Naive thymus-derived CD4-positive, alpha-beta T cell (primary cell): ENCODE measurements at regions of chr10 and their contacts with region 1.

Region 1: DNA sequence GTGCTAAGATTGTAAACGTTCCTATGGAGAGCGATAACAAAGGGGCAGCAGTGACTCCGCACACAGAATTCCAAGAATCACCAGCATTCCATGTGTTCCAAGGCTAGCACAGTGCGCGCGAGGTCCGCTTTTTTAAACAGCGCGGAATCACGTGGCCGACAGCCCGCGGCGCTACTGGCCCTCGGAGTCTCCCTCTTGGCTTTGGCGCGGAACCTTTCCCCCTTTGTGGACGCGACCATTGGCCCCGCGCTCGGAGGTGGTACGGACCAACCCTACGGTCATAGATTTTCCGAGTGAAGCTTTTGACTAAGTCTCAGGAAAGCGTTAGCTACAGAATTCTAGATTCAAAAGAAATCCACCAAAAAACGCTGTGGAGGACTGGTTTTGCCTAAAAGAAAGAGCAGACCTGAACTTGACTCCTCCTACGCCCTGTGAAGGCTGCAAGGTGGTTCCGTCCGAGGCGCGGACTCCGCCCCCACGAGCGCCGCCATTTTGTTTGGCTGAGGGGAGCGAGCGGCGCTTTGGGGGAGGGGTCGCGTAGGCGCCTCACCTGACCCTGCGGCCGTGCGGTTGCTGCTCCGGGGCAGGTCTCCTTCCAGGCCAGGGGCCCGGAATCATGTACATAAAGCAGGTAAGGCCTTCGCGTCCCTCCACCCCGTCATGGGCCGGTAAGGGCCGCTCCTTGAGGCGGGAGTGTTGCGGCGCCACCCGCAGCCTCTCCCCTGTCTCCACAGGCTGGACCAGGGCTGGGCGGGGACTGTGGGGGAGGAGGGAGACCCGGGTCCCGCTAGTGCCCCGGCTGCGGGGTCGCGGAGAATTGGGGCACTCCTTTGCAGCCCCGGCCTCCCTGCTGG is at the start of gene SMC3:
- DNase-seq: peak; percentile 82 to 96 (median 94)
- ATAC-seq: peak; percentile 94
- H3K4me3 ChIP-seq: peak within 1 kb of the TSS; percentile 88
- H3K4me3 Mint-ChIP-seq: peak within 1 kb of the TSS; percentile 91 to 99 (median 96)
- H3K27ac ChIP-seq: peak within 1 kb of the TSS; percentile 88
- H3K27ac Mint-ChIP-seq: peak within 1 kb of the TSS; percentile 96 to 99 (median 97)
- H3K4me1 ChIP-seq: peaks cover 20 to 21% of the 10 kb centered on the region in 2 donors
- H3K4me1 Mint-ChIP-seq: peaks cover 21 to 45% (median 38%) of the 10 kb centered on the region in 7 donors
- H3K27me3 ChIP-seq: no peaks in the 10 kb centered on the region
- H3K27me3 Mint-ChIP-seq: peaks cover 6 to 26% (median 14%) of the 10 kb centered on the region in 5 donors
- total RNA-seq, gene SMC3: 29.8 to 69.8 (median 48.5) TPM

Region 2: DNA sequence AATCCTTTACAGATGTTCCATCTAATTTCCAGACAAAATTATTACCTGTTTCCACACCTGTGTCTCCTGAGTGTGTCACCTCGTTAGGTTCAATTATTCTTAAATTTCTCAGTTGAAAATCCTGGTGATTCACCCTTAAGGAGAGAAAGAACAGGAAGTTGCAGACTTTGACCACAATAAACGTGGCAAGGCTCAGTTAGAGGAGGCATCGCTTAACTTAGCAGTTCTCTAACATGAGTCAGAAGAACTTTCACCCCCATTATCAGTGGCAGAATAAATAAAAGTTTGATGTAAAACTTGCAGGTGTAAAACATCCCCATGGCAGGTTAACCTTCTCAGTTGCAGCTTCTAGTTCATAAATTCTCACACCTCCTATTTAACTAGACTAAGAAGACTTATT is 652.5 kb before region 1 on chr10:
- CTCF ChIA-PET with region 1: no interaction called
- POLR2A ChIA-PET with region 1: no interaction called
- intact Hi-C with region 1: loop called in 1 of 2 experiments (anchors 10 kb)
- DNase-seq: peak in 7 of 9 donors; percentile 37 to 71 (median 56)
- ATAC-seq: peak; percentile 93
- H3K4me3 ChIP-seq: no peak overlapping the region
- H3K4me3 Mint-ChIP-seq: peak overlapping the region; percentile 56 to 78 (median 68)
- H3K27ac ChIP-seq: no peak overlapping the region
- H3K27ac Mint-ChIP-seq: peak overlapping the region in 8 of 9 donors; percentile 40 to 88 (median 58)
- H3K4me1 ChIP-seq: peaks cover 32 to 60% of the 10 kb centered on the region in 2 donors
- H3K4me1 Mint-ChIP-seq: peaks cover 64 to 94% (median 87%) of the 10 kb centered on the region in 7 donors
- H3K27me3 ChIP-seq: no peaks in the 10 kb centered on the region
- H3K27me3 Mint-ChIP-seq: no peaks in the 10 kb centered on the region

Region 3: DNA sequence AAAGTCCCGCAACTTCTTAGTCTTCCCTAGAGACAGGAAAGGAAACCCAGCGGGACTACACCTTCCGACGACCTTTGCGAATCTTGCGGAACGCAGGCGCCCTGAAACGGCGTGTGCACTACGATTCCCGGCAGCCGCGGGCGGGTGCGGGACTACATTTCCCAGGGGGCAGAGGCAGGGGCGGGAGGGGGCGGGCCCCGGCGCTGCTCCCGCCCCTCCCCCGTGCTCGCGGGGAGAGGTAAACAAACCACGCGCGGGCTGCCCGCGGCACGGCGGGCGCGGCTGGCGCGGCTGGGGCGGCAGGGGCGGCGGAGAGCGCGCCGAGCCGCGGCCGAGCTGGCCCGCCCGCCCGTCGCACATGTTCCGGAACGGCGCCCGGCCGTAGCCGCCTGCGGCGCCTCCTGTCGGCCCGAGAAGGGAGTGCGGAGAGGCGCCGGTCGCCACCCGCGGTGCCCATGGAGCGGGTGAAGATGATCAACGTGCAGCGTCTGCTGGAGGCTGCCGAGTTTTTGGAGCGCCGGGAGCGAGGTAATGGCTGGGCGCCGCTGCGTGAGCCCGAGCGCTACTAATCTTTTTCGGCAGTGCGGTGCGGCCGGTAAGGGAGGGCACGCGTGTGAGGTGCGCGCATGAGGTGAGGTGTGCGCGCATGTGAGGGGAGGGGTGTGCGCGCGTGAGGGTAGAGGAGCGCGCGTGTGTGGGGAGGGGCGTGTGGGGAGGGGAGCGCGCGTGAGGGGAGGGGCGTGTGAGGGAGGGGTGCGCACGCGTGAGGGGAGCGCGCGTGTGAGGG is 341.5 kb before region 1 on chr10:
- CTCF ChIA-PET with region 1: no interaction called
- POLR2A ChIA-PET with region 1: interaction called, 3 read pairs
- intact Hi-C with region 1: loop called (anchors 1 kb)
- DNase-seq: peak; percentile 83 to 91 (median 88)
- ATAC-seq: peak; percentile 73
- H3K4me3 ChIP-seq: peak overlapping the region; percentile 75
- H3K4me3 Mint-ChIP-seq: peak overlapping the region; percentile 87 to 99 (median 94)
- H3K27ac ChIP-seq: peak overlapping the region; percentile 92
- H3K27ac Mint-ChIP-seq: peak overlapping the region; percentile 78 to 97 (median 96)
- H3K4me1 ChIP-seq: peaks cover 16 to 27% of the 10 kb centered on the region in 2 donors
- H3K4me1 Mint-ChIP-seq: peaks cover 27 to 68% (median 49%) of the 10 kb centered on the region in 7 donors
- H3K27me3 ChIP-seq: no peaks in the 10 kb centered on the region
- H3K27me3 Mint-ChIP-seq: no peaks in the 10 kb centered on the region

Region 4: GRCh38 chr10:110408203-110408751 is 159.2 kb before region 1 on chr10:
- CTCF ChIA-PET with region 1: no interaction called
- POLR2A ChIA-PET with region 1: no interaction called
- intact Hi-C with region 1: no loop called
- DNase-seq: no peak
- ATAC-seq: peak; percentile 13
- H3K4me3 ChIP-seq: no peak overlapping the region
- H3K4me3 Mint-ChIP-seq: no peak overlapping the region
- H3K27ac ChIP-seq: no peak overlapping the region
- H3K27ac Mint-ChIP-seq: no peak overlapping the region
- H3K4me1 ChIP-seq: peaks cover 0 to 6% of the 10 kb centered on the region in 2 donors
- H3K4me1 Mint-ChIP-seq: peaks cover 0 to 48% (median 5%) of the 10 kb centered on the region in 7 donors
- H3K27me3 ChIP-seq: no peaks in the 10 kb centered on the region
- H3K27me3 Mint-ChIP-seq: peaks cover 0 to 2% (median 0%) of the 10 kb centered on the region in 5 donors

Region 5: DNA sequence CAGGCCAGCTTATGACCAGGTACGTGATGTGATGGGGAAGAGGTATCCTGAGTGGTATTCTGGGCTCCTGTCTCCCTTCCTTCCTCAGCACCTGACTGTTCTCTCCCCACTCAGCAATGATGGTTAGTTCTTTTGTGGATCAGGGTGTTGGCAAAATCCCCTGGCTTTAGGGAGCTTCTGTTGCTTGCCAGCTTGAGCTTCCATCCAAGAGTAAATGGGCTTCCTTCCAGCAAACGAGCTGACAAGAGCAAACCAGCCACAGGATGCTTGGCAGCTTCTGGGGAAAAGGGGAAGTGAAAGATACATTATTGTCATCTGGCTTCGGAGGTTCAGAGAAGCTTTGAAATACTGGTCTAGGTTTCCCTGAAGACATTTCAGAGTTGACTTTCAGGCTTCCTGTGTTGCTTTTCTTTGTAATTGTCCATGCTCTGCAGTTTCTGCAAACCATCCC is 64.6 kb before region 1 on chr10:
- CTCF ChIA-PET with region 1: no interaction called
- POLR2A ChIA-PET with region 1: interaction called, 3 read pairs
- intact Hi-C with region 1: loop called in 1 of 2 experiments (anchors 1 kb)
- DNase-seq: peak in 1 of 9 donors; percentile 18
- ATAC-seq: peak; percentile 10
- H3K4me3 ChIP-seq: peak overlapping the region; percentile 17
- H3K4me3 Mint-ChIP-seq: peak overlapping the region; percentile 15 to 97 (median 70)
- H3K27ac ChIP-seq: peak overlapping the region; percentile 53
- H3K27ac Mint-ChIP-seq: peak overlapping the region; percentile 53 to 94 (median 81)
- H3K4me1 ChIP-seq: peaks cover 42 to 70% of the 10 kb centered on the region in 2 donors
- H3K4me1 Mint-ChIP-seq: peaks cover 55 to 88% (median 60%) of the 10 kb centered on the region in 7 donors
- H3K27me3 ChIP-seq: no peaks in the 10 kb centered on the region
- H3K27me3 Mint-ChIP-seq: peaks cover 0 to 3% (median 0%) of the 10 kb centered on the region in 5 donors

Region 6: GRCh38 chr10:110600487-110601101 is 33.2 kb after region 1 on chr10:
- CTCF ChIA-PET with region 1: interaction called, 3 read pairs
- POLR2A ChIA-PET with region 1: no interaction called
- intact Hi-C with region 1: loop called in 1 of 2 experiments (anchors 5 kb)
- DNase-seq: peak in 6 of 9 donors; percentile 19 to 39 (median 29)
- ATAC-seq: peak; percentile 70
- H3K4me3 ChIP-seq: no peak overlapping the region
- H3K4me3 Mint-ChIP-seq: no peak overlapping the region
- H3K27ac ChIP-seq: no peak overlapping the region
- H3K27ac Mint-ChIP-seq: no peak overlapping the region
- H3K4me1 ChIP-seq: no peaks in the 10 kb centered on the region
- H3K4me1 Mint-ChIP-seq: peaks cover 0 to 6% (median 0%) of the 10 kb centered on the region in 7 donors
- H3K27me3 ChIP-seq: no peaks in the 10 kb centered on the region
- H3K27me3 Mint-ChIP-seq: no peaks in the 10 kb centered on the region

Region 7: GRCh38 chr10:110739811-110740271 is 172.4 kb after region 1 on chr10:
- CTCF ChIA-PET with region 1: no interaction called
- POLR2A ChIA-PET with region 1: no interaction called
- intact Hi-C with region 1: no loop called
- DNase-seq: no peak
- ATAC-seq: peak; percentile 53
- H3K4me3 ChIP-seq: no peak overlapping the region
- H3K4me3 Mint-ChIP-seq: peak overlapping the region in 7 of 10 donors; percentile 5 to 71 (median 30)
- H3K27ac ChIP-seq: no peak overlapping the region
- H3K27ac Mint-ChIP-seq: peak overlapping the region in 5 of 9 donors; percentile 23 to 75 (median 54)
- H3K4me1 ChIP-seq: peaks cover 0 to 41% of the 10 kb centered on the region in 2 donors
- H3K4me1 Mint-ChIP-seq: peaks cover 29 to 64% (median 57%) of the 10 kb centered on the region in 7 donors
- H3K27me3 ChIP-seq: no peaks in the 10 kb centered on the region
- H3K27me3 Mint-ChIP-seq: peaks cover 0 to 12% (median 0%) of the 10 kb centered on the region in 5 donors

Region 8: DNA sequence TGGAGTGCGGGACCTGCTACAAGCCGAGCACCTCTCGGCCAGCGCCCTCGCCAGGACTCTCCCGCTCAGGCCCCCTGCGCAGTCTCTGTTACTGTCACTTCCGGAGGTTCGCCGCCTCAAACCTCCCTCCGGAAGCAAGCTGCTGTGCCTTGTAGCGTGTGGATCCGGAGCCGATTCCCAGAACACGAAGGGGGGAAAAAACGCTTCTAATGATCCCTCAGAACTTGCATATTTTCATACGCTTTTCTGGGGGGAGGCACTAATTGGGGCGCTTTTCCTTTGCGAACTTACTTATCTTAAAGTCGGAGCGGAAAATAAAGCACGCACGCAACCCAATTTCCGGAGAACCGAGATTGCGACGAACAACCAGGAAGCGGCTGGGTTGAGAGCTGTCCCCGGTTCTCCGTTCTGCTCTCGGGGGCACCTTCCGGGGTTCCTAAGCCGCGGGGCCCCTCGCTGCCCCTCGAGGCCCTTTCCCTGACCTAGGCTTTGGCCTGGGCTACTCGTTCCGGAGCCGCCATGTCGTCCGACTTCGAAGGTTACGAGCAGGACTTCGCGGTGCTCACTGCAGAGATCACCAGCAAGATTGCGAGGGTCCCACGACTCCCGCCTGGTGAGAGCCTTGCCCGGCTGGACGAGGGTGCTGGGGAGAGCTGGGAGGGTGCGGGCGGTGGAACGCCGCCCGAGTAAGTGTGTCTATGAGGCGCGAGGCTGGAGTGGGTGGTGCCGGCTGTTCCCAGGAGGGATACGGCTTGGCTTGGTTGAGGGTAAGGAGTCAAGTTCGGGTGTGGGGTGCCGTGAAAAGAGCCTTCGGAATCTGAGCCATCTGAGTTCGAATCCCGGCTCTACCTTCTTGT is 1879.7 kb after region 1 on chr10 and contains the starts of genes VTI1A and ZDHHC6:
- CTCF ChIA-PET with region 1: no interaction called
- POLR2A ChIA-PET with region 1: no interaction called
- intact Hi-C with region 1: loop called in 1 of 2 experiments (anchors 5 kb)
- DNase-seq: peak; percentile 70 to 89 (median 84)
- ATAC-seq: peak; percentile 95
- H3K4me3 ChIP-seq: peak within 1 kb of the TSS; percentile 85
- H3K4me3 Mint-ChIP-seq: peak within 1 kb of the TSS; percentile 92 to 100 (median 96)
- H3K27ac ChIP-seq: peak within 1 kb of the TSS; percentile 90
- H3K27ac Mint-ChIP-seq: peak within 1 kb of the TSS; percentile 95 to 100 (median 99)
- H3K4me1 ChIP-seq: peaks cover 23 to 25% of the 10 kb centered on the region in 2 donors
- H3K4me1 Mint-ChIP-seq: peaks cover 31 to 81% (median 65%) of the 10 kb centered on the region in 7 donors
- H3K27me3 ChIP-seq: no peaks in the 10 kb centered on the region
- H3K27me3 Mint-ChIP-seq: no peaks in the 10 kb centered on the region
- total RNA-seq, gene VTI1A: 40.2 to 56.8 (median 51.4) TPM
- total RNA-seq, gene ZDHHC6: 34.3 to 66.3 (median 50.9) TPM